ENCODE measurements at regions of chr12 and their contacts with region 1.

Region 1: GRCh38 chr12:59149997-59150642 is 229.8 kb upstream of the LRIG3 start:
- DNase-seq: peak in 5 of 7 donors; percentile 11 to 35 (median 22)
- H3K4me3 ChIP-seq: no peak overlapping the region
- H3K27ac ChIP-seq: no peak overlapping the region
- H3K4me1 ChIP-seq: no peaks in the 10 kb centered on the region
- H3K27me3 ChIP-seq: no peaks in the 10 kb centered on the region
- CTCF ChIP-seq: peak; percentile 60 to 99 (median 95)
- POLR2A ChIP-seq: no peak

Region 2: GRCh38 chr12:58540480-58541299 is 609.4 kb before region 1 on chr12:
- intact Hi-C with region 1: loop called in 1 of 2 experiments (anchors 10 kb)
- DNase-seq: peak; percentile 55 to 87 (median 67)
- H3K4me3 ChIP-seq: no peak overlapping the region
- H3K27ac ChIP-seq: no peak overlapping the region
- H3K4me1 ChIP-seq: no peaks in the 10 kb centered on the region
- H3K27me3 ChIP-seq: no peaks in the 10 kb centered on the region
- CTCF ChIP-seq: peak; percentile 41 to 78 (median 65)
- POLR2A ChIP-seq: no peak

Region 3: GRCh38 chr12:59113831-59114615 is 36.1 kb before region 1 on chr12:
- intact Hi-C with region 1: loop called in 1 of 2 experiments (anchors 5 kb)
- DNase-seq: peak; percentile 71 to 84 (median 76)
- H3K4me3 ChIP-seq: no peak overlapping the region
- H3K27ac ChIP-seq: no peak overlapping the region
- H3K4me1 ChIP-seq: no peaks in the 10 kb centered on the region
- H3K27me3 ChIP-seq: no peaks in the 10 kb centered on the region
- CTCF ChIP-seq: peak; percentile 61 to 83 (median 74)
- POLR2A ChIP-seq: no peak